ENCODE measurements at regions of chr3 and their contacts with region 1.

Region 1: GRCh38 chr3:8769088-8769822 is at the start of gene OXTR:
- DNase-seq: peak; percentile 90
- ATAC-seq: peak; percentile 86
- H3K4me3 ChIP-seq: peak within 1 kb of the TSS; percentile 82
- H3K27ac ChIP-seq: no peak within 1 kb of the TSS
- H3K4me1 ChIP-seq: peaks cover 37% of the 10 kb centered on the region; the same call in 1 of the 2 replicates
- H3K27me3 ChIP-seq: no peaks in the 10 kb centered on the region
- CTCF ChIP-seq: peak; percentile 99
- total RNA-seq, gene OXTR: 21.5 and 23.1 TPM in 2 replicates

Region 2: DNA sequence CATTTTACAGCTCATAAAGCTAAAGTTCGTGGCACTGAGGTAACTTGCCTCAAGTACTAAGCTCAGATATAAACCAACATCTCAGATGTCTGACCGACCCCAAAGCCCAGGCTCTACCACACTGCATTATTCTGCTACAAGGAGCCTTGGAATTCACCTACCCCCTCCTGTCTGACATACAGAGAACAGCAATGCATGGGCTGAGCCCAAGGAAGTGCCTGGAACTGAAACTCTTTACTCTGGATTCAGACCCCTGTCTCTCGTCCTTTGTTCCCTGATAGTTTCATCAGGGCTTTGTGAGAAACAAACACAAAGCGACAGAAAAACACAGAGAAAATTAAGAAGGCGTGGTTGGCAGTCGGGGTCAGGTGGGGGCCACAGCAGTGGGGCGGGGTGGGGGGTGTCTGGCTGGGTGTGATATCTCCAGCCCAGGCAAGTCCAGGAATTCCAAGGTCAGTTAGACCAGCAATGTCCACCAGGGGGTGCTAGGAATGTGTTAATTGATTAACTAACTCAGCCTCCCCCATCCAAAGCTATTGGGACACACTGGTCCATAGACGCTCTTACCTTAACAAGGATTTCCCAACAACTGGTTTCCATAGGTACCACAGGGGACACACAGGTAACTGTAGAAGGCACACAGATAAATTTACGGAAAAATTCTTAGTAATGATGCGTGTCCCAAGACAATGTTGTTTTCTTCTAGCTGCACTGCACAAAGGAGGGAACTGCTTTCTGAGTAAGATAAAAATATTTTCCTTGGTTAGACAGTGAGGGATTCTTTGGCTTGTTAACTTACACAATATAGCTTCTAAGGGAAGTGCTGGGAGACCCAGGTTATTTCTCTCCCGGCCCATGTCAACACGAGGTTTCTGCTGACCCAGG is 105.8 kb before region 1 on chr3:
- CTCF ChIA-PET with region 1: interaction called, 4 read pairs
- POLR2A ChIA-PET with region 1: no interaction called
- intact Hi-C with region 1: loop called (anchors 1 kb)
- DNase-seq: peak; percentile 92
- ATAC-seq: peak; percentile 84
- H3K4me3 ChIP-seq: no peak overlapping the region
- H3K27ac ChIP-seq: no peak overlapping the region
- H3K4me1 ChIP-seq: peaks cover 6% of the 10 kb centered on the region
- H3K27me3 ChIP-seq: no peaks in the 10 kb centered on the region
- CTCF ChIP-seq: peak; percentile 75

Region 3: DNA sequence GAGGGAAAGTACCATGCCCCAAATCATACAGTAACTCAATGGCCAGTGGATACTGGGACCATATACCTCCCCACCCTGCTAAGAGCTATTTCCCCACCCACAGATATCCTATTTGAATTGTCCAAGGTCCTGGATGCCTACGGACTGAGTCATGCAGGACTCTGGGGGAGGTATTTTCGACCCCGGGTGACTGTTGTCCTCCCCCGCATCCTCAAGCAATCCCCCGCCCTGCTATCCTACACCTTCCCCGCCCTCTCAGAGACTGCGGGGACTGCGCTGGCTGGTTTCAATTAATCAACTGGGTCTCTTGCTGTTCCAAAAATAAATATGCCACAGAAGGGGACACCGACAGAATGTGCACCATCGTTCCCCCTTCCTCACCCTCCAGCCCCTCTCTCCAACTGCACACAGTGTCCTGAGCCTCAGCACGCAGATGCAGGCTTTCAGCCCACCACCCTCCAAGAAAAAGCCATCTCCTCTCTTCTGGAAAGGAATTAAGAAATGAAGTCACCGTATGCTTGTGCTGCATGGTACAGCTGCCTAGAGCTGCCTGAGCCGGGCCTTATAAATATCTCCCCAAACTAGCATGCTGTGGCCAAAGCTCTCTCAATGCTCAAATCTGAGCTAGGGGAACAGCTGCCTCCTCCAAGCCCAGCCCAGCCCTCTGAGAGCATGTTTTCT is 27.5 kb before region 1 on chr3:
- CTCF ChIA-PET with region 1: interaction called, 14 read pairs
- POLR2A ChIA-PET with region 1: interaction called, 5 read pairs
- intact Hi-C with region 1: loop called (anchors 1 kb)
- DNase-seq: peak; percentile 98
- ATAC-seq: peak; percentile 76
- H3K4me3 ChIP-seq: peak overlapping the region; percentile 45
- H3K27ac ChIP-seq: peak overlapping the region; percentile 91
- H3K4me1 ChIP-seq: peaks cover 51% of the 10 kb centered on the region
- H3K27me3 ChIP-seq: no peaks in the 10 kb centered on the region
- CTCF ChIP-seq: no peak

Region 4: DNA sequence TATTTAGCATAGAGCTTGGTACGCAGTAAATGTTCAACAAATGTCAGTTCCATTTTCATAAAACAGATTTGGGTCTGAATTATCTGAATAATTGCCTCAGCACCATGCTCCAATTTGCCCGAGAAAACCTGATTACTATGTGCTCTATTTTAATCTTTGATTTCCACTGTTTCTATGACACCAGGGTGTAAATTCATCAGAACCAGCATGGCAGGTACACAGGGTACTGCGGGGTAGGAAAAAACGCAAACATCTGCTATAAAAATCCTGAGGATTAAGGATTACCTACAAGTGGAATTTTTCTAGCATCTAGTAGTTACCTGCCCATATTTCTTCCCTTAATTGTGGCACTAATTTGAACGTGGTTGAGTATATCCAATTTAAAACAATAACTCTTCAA is 123.7 kb after region 1 on chr3:
- CTCF ChIA-PET with region 1: interaction called, 10 read pairs
- POLR2A ChIA-PET with region 1: no interaction called
- intact Hi-C with region 1: no loop called
- DNase-seq: no peak
- ATAC-seq: no peak
- H3K4me3 ChIP-seq: no peak overlapping the region
- H3K27ac ChIP-seq: no peak overlapping the region
- H3K4me1 ChIP-seq: no peaks in the 10 kb centered on the region
- H3K27me3 ChIP-seq: no peaks in the 10 kb centered on the region
- CTCF ChIP-seq: no peak

Region 5: DNA sequence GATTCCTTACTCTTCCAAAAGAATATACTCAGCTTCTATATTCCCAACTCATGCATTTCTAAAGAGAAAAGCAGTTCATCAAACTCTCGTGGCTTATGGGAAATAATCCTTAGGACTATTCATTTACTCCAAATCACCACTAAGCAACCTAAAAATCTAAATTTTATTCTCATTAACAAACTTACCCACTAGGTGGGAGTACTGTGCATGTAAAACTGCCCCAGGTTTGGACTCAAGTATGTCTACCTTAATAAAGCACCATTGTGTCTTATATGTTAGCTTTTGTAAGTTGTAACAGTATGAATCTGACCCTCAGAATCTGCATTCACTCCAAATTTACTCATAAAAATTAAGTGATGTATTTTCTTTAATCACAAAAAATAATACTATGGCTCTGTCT is 168.8 kb after region 1 on chr3:
- CTCF ChIA-PET with region 1: no interaction called
- POLR2A ChIA-PET with region 1: no interaction called
- intact Hi-C with region 1: loop called (anchors 1 kb)
- DNase-seq: peak; percentile 66
- ATAC-seq: peak; percentile 52
- H3K4me3 ChIP-seq: peak overlapping the region; percentile 29; the same call in 1 of the 2 replicates
- H3K27ac ChIP-seq: peak overlapping the region; percentile 81
- H3K4me1 ChIP-seq: peaks cover 29% of the 10 kb centered on the region
- H3K27me3 ChIP-seq: no peaks in the 10 kb centered on the region
- CTCF ChIP-seq: peak; percentile 75

Region 6: DNA sequence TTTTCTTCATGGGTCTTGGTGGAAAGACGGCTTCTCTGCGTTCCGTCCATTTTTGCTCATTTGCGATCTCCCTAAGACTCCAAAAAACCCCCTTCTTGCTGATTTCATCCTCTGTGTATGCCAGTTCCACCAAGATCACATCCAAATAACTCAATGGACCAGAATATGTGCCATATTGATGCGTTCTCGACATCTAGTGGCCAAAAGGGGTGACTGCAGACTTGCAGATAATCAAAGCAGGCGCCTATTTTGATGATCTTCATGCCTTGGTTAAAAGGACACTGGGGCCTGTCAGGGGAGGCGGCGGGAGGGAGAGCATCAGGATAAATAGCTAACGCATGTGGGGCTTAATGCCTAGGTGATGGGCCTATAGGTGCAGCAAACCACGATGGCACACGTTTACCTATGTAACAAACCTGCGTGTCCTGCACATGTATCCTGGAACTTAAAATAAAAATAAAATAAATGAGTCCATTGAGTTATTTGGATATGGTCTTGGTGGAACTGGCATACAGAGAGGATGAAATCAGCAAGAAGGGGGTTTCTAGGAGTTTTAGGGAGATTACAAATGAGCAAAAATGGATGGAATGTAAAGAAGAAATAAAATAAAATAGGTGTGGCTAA is 298.2 kb after region 1 on chr3:
- CTCF ChIA-PET with region 1: no interaction called
- POLR2A ChIA-PET with region 1: no interaction called
- intact Hi-C with region 1: loop called (anchors 2 kb)
- DNase-seq: peak; percentile 78
- ATAC-seq: peak; percentile 94
- H3K4me3 ChIP-seq: no peak overlapping the region
- H3K27ac ChIP-seq: no peak overlapping the region
- H3K4me1 ChIP-seq: no peaks in the 10 kb centered on the region
- H3K27me3 ChIP-seq: no peaks in the 10 kb centered on the region
- CTCF ChIP-seq: peak; percentile 97